Endothelial cell of umbilical vein (primary cell): ENCODE measurements at regions of chr2 and their contacts with region 1.

Region 1: GRCh38 chr2:88627056-88627855 is at the start of gene EIF2AK3:
- DNase-seq: peak; percentile 100
- H3K4me3 ChIP-seq: peak within 1 kb of the TSS; percentile 54 to 82 (median 79)
- H3K27ac ChIP-seq: peak within 1 kb of the TSS; percentile 95
- H3K4me1 ChIP-seq: peaks cover 24% of the 10 kb centered on the region
- H3K27me3 ChIP-seq: peaks cover 2 to 5% of the 10 kb centered on the region in 2 experiments
- CTCF ChIP-seq: no peak
- POLR2A ChIP-seq: no peak
- total RNA-seq, gene EIF2AK3: 17.3 and 17.5 TPM in 2 replicates

Region 2: GRCh38 chr2:88296247-88296646 is 331.0 kb before region 1 on chr2:
- CTCF ChIA-PET with region 1: no interaction called
- POLR2A ChIA-PET with region 1: no interaction called
- dilution Hi-C with region 1: no loop called
- intact Hi-C with region 1: no loop called
- DNase-seq: no peak
- H3K4me3 ChIP-seq: no peak overlapping the region
- H3K27ac ChIP-seq: no peak overlapping the region
- H3K4me1 ChIP-seq: no peaks in the 10 kb centered on the region
- H3K27me3 ChIP-seq: no peaks in the 10 kb centered on the region
- CTCF ChIP-seq: no peak
- POLR2A ChIP-seq: no peak

Region 3: DNA sequence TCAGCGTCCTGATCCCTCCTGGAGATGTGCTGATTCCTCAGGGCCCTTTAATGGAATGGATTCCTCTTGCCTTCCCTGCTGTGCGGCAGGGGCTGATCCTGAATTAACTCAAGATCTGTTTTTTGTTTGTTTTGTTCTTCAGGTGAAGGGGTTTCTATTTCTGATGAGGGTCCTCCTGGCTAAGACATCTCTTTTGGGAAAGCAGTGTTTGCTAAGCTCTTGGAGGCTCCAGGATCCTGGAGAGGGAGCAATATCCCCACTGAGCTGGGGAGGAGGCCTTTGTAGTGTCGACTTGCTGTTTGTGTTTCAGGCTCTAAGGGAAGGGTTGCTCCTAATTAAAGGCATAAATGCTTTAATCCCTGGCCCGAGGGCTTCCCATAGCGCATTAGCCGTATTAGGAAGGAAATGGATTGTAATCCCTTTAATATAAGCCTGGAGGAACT is 109.5 kb before region 1 on chr2:
- CTCF ChIA-PET with region 1: no interaction called
- POLR2A ChIA-PET with region 1: no interaction called
- dilution Hi-C with region 1: no loop called
- intact Hi-C with region 1: no loop called
- DNase-seq: no peak
- H3K4me3 ChIP-seq: no peak overlapping the region
- H3K27ac ChIP-seq: no peak overlapping the region
- H3K4me1 ChIP-seq: no peaks in the 10 kb centered on the region
- H3K27me3 ChIP-seq: peaks cover 0 to 3% of the 10 kb centered on the region in 2 experiments
- CTCF ChIP-seq: no peak
- POLR2A ChIP-seq: no peak

Region 4: DNA sequence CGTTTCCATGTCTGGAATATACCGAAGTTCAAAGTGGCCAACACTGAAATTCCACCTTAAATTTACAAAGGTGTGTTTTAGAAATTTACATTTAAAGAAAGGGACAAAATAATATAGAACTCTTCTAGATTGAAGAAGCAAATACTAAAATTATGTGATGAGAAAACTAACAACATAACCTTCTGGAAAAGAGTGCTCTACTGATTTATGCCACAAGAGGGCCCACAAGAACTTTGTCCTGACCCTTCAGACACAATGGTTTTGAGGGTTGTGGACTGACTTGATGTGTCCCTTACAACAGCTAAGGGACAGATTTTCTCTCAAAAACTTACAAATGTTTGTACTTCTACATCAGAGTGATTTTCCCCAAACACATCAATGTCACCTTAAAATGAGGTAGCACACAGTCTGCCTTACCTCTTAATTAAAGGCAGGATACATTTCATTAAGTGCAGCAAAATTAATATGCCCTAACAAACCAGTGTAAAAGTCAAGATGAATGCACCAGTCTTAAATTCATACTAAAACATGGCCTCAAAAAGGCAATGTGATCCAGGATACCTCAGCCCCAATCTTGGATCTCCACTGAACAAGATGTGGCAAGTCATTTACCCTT is 36.1 kb before region 1 on chr2:
- CTCF ChIA-PET with region 1: interaction called, 15 read pairs
- POLR2A ChIA-PET with region 1: no interaction called
- dilution Hi-C with region 1: no loop called
- intact Hi-C with region 1: loop called (anchors 5 kb)
- DNase-seq: peak; percentile 77
- H3K4me3 ChIP-seq: no peak overlapping the region
- H3K27ac ChIP-seq: no peak overlapping the region
- H3K4me1 ChIP-seq: no peaks in the 10 kb centered on the region
- H3K27me3 ChIP-seq: no peaks in the 10 kb centered on the region
- CTCF ChIP-seq: peak; percentile 63
- POLR2A ChIP-seq: no peak

Region 5: GRCh38 chr2:88600038-88600465 is 27.2 kb before region 1 on chr2:
- CTCF ChIA-PET with region 1: interaction called, 12 read pairs
- POLR2A ChIA-PET with region 1: interaction called, 15 read pairs
- dilution Hi-C with region 1: no loop called
- intact Hi-C with region 1: loop called (anchors 1 kb)
- DNase-seq: peak; percentile 99
- H3K4me3 ChIP-seq: no peak overlapping the region
- H3K27ac ChIP-seq: peak overlapping the region; percentile 84
- H3K4me1 ChIP-seq: peaks cover 35% of the 10 kb centered on the region
- H3K27me3 ChIP-seq: no peaks in the 10 kb centered on the region
- CTCF ChIP-seq: no peak
- POLR2A ChIP-seq: no peak

Region 6: GRCh38 chr2:88659538-88659916 is 32.3 kb after region 1 on chr2:
- CTCF ChIA-PET with region 1: interaction called, 4 read pairs
- POLR2A ChIA-PET with region 1: interaction called, 5 read pairs
- dilution Hi-C with region 1: no loop called
- intact Hi-C with region 1: loop called (anchors 1 kb)
- DNase-seq: peak; percentile 88
- H3K4me3 ChIP-seq: peak overlapping the region in 1 of 3 experiments; percentile 4
- H3K27ac ChIP-seq: peak overlapping the region; percentile 37
- H3K4me1 ChIP-seq: peaks cover 11% of the 10 kb centered on the region
- H3K27me3 ChIP-seq: no peaks in the 10 kb centered on the region
- CTCF ChIP-seq: no peak
- POLR2A ChIP-seq: no peak

Region 7: DNA sequence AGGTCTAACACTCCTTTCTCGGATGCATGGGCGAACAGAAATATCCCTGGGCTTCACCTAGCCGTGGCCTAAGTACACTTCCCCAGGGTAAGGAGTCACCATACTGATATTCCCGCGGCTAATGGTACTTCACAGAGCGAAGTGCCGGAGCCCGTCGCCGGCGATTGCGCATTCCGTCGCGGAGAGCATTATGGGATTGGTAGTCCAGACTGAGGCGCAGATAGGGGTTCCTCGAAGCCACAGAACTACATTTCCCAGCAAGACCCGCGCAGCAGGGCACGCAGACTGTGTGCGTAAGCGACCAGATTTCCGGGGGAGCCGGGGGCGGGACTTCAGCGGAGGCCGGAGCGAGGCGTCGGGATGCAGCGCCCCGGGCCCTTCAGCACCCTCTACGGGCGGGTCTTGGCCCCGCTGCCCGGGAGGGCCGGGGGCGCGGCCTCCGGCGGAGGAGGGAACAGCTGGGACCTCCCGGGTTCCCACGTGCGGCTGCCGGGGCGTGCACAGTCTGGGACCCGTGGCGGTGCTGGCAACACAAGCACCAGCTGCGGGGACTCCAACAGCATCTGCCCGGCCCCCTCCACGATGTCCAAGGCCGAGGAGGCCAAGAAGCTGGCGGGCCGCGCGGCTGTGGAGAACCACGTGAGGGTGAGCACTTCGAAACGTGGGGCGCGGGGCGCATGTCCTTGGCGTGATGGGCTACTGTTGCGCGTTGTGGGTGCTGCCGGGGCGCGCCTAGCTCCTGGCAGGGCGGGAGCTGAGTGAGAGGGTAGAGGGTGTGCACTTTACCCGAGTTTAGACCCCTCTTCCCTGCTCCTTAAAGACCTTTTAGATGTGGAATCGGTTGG is 64.3 kb after region 1 on chr2 and contains the start of gene RPIA:
- CTCF ChIA-PET with region 1: no interaction called
- POLR2A ChIA-PET with region 1: no interaction called
- dilution Hi-C with region 1: no loop called
- intact Hi-C with region 1: loop called (anchors 1 kb)
- DNase-seq: peak; percentile 99
- H3K4me3 ChIP-seq: peak within 1 kb of the TSS; percentile 44 to 83 (median 73)
- H3K27ac ChIP-seq: peak within 1 kb of the TSS; percentile 59
- H3K4me1 ChIP-seq: peaks cover 13% of the 10 kb centered on the region
- H3K27me3 ChIP-seq: no peaks in the 10 kb centered on the region
- CTCF ChIP-seq: peak; percentile 71 to 76
- POLR2A ChIP-seq: peak; percentile 61
- total RNA-seq, gene RPIA: 29.8 and 30.3 TPM in 2 replicates